ENCODE measurements at regions of chr15 and their contacts with region 1.

Region 1: DNA sequence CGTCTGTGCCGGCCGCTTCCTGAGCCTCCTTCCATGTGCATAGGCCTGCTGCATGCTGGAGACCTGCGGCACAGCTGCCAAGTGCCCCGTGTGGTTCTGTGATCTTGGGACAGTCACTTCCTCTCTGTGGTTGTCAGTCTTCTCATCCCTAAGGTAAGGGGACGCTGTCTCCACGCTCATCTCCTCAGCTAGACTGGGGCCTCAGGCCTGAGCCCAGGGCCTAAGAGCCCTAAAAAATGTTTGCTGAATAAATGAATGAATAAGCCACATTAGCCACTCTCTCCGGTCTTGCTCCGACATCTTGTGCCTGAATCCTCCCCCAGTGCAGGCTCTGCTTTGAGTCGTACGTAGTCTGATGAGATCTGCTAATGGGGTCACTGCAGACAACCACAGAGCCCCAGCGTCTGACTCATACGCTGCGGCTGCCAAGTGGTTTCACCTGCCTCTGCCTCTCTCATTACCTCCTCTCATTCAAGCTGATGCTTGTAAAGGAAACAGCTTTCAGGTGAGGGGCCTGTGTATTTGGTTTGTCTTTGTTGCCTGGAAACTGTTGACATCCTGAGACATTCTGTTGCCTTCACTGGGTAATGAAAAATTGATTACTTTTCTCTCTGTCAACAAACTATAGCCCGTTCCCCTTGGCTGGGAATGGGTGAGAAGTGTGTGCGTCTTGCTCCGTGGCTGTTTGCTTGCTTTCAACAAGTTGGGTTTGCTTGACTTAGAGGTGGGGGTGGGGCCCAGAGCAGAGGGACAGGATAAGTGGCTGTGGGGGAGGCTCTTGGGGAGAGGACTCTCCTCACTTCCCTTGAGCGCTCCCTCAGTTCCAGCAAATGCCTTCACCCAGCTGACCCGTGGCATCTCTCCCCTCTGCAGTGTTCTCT is 15.9 kb downstream of the RPLP1 start:
- DNase-seq: peak; percentile 93
- ATAC-seq: peak; percentile 69
- H3K4me3 ChIP-seq: peak overlapping the region; percentile 42; the same call in 1 of the 2 replicates
- H3K27ac ChIP-seq: peak overlapping the region; percentile 90
- H3K4me1 ChIP-seq: peaks cover 47% of the 10 kb centered on the region
- H3K27me3 ChIP-seq: no peaks in the 10 kb centered on the region
- CTCF ChIP-seq: no peak

Region 2: DNA sequence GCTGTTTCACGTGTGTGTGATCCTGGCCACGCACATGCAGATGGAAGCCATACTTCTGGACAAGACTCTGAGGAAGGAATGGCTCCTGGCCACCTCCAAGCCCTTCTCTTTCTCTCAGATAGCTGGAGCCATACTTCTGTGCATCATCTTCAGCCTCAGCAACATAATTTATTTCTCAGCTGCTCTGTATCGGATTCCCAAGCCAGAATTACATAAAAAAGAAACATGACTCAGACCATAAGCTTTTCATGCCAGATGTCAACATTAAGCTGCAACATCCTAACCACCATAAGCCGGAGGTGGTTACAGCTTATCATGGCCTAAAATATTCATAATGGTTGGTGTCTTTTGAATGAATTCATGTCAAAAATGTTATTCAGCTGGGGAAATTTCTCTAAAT is 64.9 kb before region 1 on chr15:
- CTCF ChIA-PET with region 1: no interaction called
- POLR2A ChIA-PET with region 1: no interaction called
- intact Hi-C with region 1: no loop called
- DNase-seq: peak; percentile 41
- ATAC-seq: peak; percentile 61
- H3K4me3 ChIP-seq: no peak overlapping the region
- H3K27ac ChIP-seq: no peak overlapping the region
- H3K4me1 ChIP-seq: no peaks in the 10 kb centered on the region
- H3K27me3 ChIP-seq: no peaks in the 10 kb centered on the region
- CTCF ChIP-seq: no peak

Region 3: GRCh38 chr15:69413822-69414700 is 54.4 kb before region 1 on chr15 and contains the start of gene KIF23:
- CTCF ChIA-PET with region 1: no interaction called
- POLR2A ChIA-PET with region 1: no interaction called
- intact Hi-C with region 1: loop called (anchors 2 kb)
- DNase-seq: peak; percentile 96
- ATAC-seq: peak; percentile 89
- H3K4me3 ChIP-seq: peak within 1 kb of the TSS; percentile 95
- H3K27ac ChIP-seq: peak within 1 kb of the TSS; percentile 56
- H3K4me1 ChIP-seq: peaks cover 29% of the 10 kb centered on the region
- H3K27me3 ChIP-seq: no peaks in the 10 kb centered on the region
- CTCF ChIP-seq: no peak
- total RNA-seq, gene KIF23: 77.3 and 87.0 TPM in 2 replicates

Measured in PC-3 (cell line).